CD4-positive, alpha-beta T cell (primary cell): ENCODE measurements at regions of chr2 and their contacts with region 1.

Region 1: DNA sequence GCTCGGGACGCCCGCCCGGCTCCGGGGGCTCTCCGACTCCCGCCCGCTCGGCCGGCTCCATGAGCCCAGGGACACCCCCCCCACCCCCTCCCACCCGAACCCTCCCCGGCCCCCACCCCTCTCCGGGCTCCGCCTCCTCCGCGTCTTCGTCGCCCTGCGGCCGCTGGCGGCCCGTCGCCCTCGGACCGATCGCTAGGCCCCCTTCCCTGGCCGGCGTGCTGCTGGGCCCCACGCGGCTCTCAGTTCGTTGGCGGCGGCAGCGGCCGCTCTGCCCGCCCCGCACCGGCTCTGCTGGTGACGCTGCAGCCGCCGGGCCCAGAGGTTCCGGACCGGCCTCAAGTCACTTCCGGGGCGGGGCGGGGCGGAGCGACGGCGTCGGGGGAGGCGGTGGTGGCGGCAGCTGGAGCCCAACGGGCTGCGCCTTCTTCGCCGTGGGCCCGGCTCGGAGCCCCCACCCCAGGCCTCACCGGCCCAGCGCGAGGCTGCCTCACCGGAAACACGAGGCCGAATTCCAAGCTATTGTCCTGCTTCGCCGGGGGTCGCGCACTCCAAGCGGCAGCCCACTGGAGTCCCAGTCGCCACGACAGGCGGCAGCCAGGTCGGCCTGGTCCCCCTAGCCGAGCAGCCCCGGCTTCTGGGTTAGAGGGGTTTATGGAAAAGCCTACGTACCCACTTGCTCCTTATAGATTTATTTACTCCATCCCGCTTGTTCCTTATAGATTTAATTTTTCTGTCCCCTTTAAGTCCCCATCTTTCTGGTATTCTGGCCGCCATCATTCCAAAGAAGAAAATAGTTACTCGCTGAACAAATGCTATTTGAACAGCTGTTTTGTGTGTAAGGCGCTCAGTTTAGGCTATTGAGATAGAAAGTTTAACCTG is at the start of gene PSME4:
- DNase-seq: peak; percentile 85 to 98 (median 94)
- ATAC-seq: peak; percentile 88
- H3K4me3 ChIP-seq: peak within 1 kb of the TSS; percentile 79
- H3K4me3 Mint-ChIP-seq: peak within 1 kb of the TSS; percentile 98
- H3K27ac ChIP-seq: peak within 1 kb of the TSS; percentile 81 to 82
- H3K27ac Mint-ChIP-seq: peak within 1 kb of the TSS; percentile 90
- H3K4me1 ChIP-seq: peaks cover 43% of the 10 kb centered on the region
- H3K4me1 Mint-ChIP-seq: peaks cover 58% of the 10 kb centered on the region
- H3K27me3 ChIP-seq: no peaks in the 10 kb centered on the region
- H3K27me3 Mint-ChIP-seq: no peaks in the 10 kb centered on the region
- CTCF ChIP-seq: no peak
- total RNA-seq, gene PSME4: 82.6 to 87.0 TPM

Region 2: GRCh38 chr2:53767405-53768241 is 203.3 kb before region 1 on chr2 and contains the start of gene CHAC2:
- CTCF ChIA-PET with region 1: no interaction called
- POLR2A ChIA-PET with region 1: interaction called, 11 read pairs
- intact Hi-C with region 1: no loop called
- DNase-seq: peak; percentile 68 to 93 (median 78)
- ATAC-seq: peak; percentile 88
- H3K4me3 ChIP-seq: peak within 1 kb of the TSS; percentile 77
- H3K4me3 Mint-ChIP-seq: peak within 1 kb of the TSS; percentile 95
- H3K27ac ChIP-seq: peak within 1 kb of the TSS; percentile 75 to 83
- H3K27ac Mint-ChIP-seq: peak within 1 kb of the TSS; percentile 91
- H3K4me1 ChIP-seq: peaks cover 13% of the 10 kb centered on the region
- H3K4me1 Mint-ChIP-seq: peaks cover 41% of the 10 kb centered on the region
- H3K27me3 ChIP-seq: no peaks in the 10 kb centered on the region
- H3K27me3 Mint-ChIP-seq: no peaks in the 10 kb centered on the region
- CTCF ChIP-seq: peak; percentile 59
- total RNA-seq, gene CHAC2: 0.47 to 0.85 TPM

Region 3: DNA sequence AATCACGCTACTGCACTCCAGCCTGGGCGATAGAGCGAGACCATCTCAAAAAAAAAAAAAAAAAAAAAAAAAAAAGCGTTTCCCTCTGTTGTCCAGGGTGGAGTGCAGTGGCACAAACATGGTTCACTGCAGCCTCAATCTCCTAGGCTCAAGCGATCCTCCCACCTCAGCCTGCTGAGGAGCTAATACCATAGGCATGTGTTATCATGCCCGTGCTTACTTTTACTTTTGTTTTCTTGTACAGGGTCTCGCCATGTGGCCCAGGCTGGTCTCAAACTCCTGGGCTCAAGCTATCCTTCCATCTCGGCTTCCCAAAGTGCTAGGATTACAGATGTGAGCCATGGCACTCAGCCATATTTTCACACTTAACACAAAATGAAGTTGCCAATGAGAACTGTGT is 37.6 kb before region 1 on chr2:
- CTCF ChIA-PET with region 1: interaction called, 3 read pairs
- POLR2A ChIA-PET with region 1: interaction called, 5 read pairs
- intact Hi-C with region 1: loop called in 1 of 2 experiments (anchors 5 kb)
- DNase-seq: no peak
- ATAC-seq: no peak
- H3K4me3 ChIP-seq: no peak overlapping the region
- H3K4me3 Mint-ChIP-seq: no peak overlapping the region
- H3K27ac ChIP-seq: no peak overlapping the region
- H3K27ac Mint-ChIP-seq: no peak overlapping the region
- H3K4me1 ChIP-seq: no peaks in the 10 kb centered on the region
- H3K4me1 Mint-ChIP-seq: peaks cover 3% of the 10 kb centered on the region
- H3K27me3 ChIP-seq: no peaks in the 10 kb centered on the region
- H3K27me3 Mint-ChIP-seq: no peaks in the 10 kb centered on the region
- CTCF ChIP-seq: no peak

Region 4: GRCh38 chr2:54000524-54000923 is 29.6 kb after region 1 on chr2:
- CTCF ChIA-PET with region 1: no interaction called
- POLR2A ChIA-PET with region 1: interaction called, 49 read pairs
- intact Hi-C with region 1: no loop called
- DNase-seq: no peak
- ATAC-seq: no peak
- H3K4me3 ChIP-seq: no peak overlapping the region
- H3K4me3 Mint-ChIP-seq: no peak overlapping the region
- H3K27ac ChIP-seq: no peak overlapping the region
- H3K27ac Mint-ChIP-seq: no peak overlapping the region
- H3K4me1 ChIP-seq: peaks cover 17% of the 10 kb centered on the region
- H3K4me1 Mint-ChIP-seq: peaks cover 5% of the 10 kb centered on the region
- H3K27me3 ChIP-seq: no peaks in the 10 kb centered on the region
- H3K27me3 Mint-ChIP-seq: no peaks in the 10 kb centered on the region
- CTCF ChIP-seq: no peak

Region 5: DNA sequence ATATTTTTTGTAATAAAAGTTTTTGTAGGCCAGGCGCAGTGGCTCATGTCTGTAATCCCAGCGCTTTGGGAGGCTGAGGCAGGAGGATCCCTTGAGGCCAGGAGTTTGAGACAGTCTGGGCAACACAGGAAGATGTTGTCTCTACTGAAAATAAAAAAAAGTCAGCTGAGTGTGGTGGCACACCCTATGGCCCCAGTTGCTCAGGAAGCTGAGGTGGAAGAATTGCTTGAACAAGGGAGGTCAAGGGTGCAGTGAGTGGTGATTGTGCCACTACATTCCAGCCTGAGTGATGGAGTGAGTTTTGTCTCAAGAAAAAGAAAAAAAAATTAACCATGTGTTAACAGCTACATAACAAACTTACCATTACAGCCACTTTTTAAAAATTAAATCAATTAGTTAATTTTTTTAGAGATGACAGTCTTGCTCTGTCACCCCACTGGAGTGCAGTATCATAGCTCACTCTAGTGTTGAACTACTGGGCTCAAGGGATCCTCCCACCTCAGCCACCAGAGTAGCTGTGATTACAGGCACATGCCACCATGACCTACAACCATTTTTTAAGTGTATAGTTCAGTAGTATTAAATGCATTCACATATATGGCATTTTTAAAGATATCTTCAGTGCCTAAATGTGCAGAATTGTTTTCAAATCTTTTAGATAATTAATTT is 77.3 kb after region 1 on chr2:
- CTCF ChIA-PET with region 1: interaction called, 6 read pairs
- POLR2A ChIA-PET with region 1: interaction called, 14 read pairs
- intact Hi-C with region 1: no loop called
- DNase-seq: peak in 3 of 14 experiments; percentile 21 to 41 (median 24)
- ATAC-seq: peak; percentile 80
- H3K4me3 ChIP-seq: no peak overlapping the region
- H3K4me3 Mint-ChIP-seq: no peak overlapping the region
- H3K27ac ChIP-seq: no peak overlapping the region
- H3K27ac Mint-ChIP-seq: no peak overlapping the region
- H3K4me1 ChIP-seq: peaks cover 16% of the 10 kb centered on the region
- H3K4me1 Mint-ChIP-seq: peaks cover 19% of the 10 kb centered on the region
- H3K27me3 ChIP-seq: no peaks in the 10 kb centered on the region
- H3K27me3 Mint-ChIP-seq: no peaks in the 10 kb centered on the region
- CTCF ChIP-seq: peak; percentile 34

Region 6: GRCh38 chr2:54107903-54108615 is 137.1 kb after region 1 on chr2:
- CTCF ChIA-PET with region 1: no interaction called
- POLR2A ChIA-PET with region 1: no interaction called
- intact Hi-C with region 1: no loop called
- DNase-seq: no peak
- ATAC-seq: no peak
- H3K4me3 ChIP-seq: no peak overlapping the region
- H3K4me3 Mint-ChIP-seq: no peak overlapping the region
- H3K27ac ChIP-seq: no peak overlapping the region
- H3K27ac Mint-ChIP-seq: no peak overlapping the region
- H3K4me1 ChIP-seq: peaks cover 8% of the 10 kb centered on the region
- H3K4me1 Mint-ChIP-seq: peaks cover 11% of the 10 kb centered on the region
- H3K27me3 ChIP-seq: no peaks in the 10 kb centered on the region
- H3K27me3 Mint-ChIP-seq: no peaks in the 10 kb centered on the region
- CTCF ChIP-seq: no peak

Region 7: DNA sequence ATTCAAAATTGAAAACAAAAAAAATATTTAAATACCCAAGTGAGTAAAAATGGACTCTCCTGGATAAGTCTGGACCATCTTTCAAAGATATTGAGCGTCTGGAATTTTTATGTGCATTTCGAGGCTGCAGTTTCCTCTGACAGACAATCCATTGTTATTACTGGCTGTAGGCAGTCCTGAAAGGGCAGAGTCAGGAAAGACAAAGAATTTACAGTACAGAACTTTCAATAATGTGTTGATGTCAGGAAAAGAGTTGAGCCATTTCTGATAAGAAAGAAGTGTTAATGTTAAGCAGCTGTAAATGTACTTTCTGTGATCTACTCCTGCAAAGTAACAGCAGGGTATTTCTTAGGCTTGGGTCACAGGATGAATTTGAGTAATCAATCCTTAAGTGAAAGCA is 255.3 kb after region 1 on chr2:
- CTCF ChIA-PET with region 1: no interaction called
- POLR2A ChIA-PET with region 1: no interaction called
- intact Hi-C with region 1: no loop called
- DNase-seq: no peak
- ATAC-seq: no peak
- H3K4me3 ChIP-seq: no peak overlapping the region
- H3K4me3 Mint-ChIP-seq: no peak overlapping the region
- H3K27ac ChIP-seq: no peak overlapping the region
- H3K27ac Mint-ChIP-seq: no peak overlapping the region
- H3K4me1 ChIP-seq: no peaks in the 10 kb centered on the region
- H3K4me1 Mint-ChIP-seq: no peaks in the 10 kb centered on the region
- H3K27me3 ChIP-seq: no peaks in the 10 kb centered on the region
- H3K27me3 Mint-ChIP-seq: no peaks in the 10 kb centered on the region
- CTCF ChIP-seq: no peak